PC-9 (cell line): ENCODE measurements at regions of chr7 and their contacts with region 1.

Region 1: GRCh38 chr7:101426303-101427011 is 63.8 kb downstream of the COL26A1 start:
- DNase-seq: no peak
- H3K4me3 ChIP-seq: no peak overlapping the region
- H3K27ac ChIP-seq: no peak overlapping the region
- H3K4me1 ChIP-seq: no peaks in the 10 kb centered on the region
- H3K27me3 ChIP-seq: peaks cover 51% of the 10 kb centered on the region
- CTCF ChIP-seq: no peak

Region 2: GRCh38 chr7:101391991-101392390 is 34.5 kb before region 1 on chr7:
- CTCF ChIA-PET with region 1: no interaction called
- POLR2A ChIA-PET with region 1: interaction called, 37 read pairs
- intact Hi-C with region 1: no loop called
- DNase-seq: no peak
- H3K4me3 ChIP-seq: no peak overlapping the region
- H3K27ac ChIP-seq: no peak overlapping the region
- H3K4me1 ChIP-seq: no peaks in the 10 kb centered on the region
- H3K27me3 ChIP-seq: no peaks in the 10 kb centered on the region; the same call in 1 of the 2 replicates
- CTCF ChIP-seq: no peak

Region 3: DNA sequence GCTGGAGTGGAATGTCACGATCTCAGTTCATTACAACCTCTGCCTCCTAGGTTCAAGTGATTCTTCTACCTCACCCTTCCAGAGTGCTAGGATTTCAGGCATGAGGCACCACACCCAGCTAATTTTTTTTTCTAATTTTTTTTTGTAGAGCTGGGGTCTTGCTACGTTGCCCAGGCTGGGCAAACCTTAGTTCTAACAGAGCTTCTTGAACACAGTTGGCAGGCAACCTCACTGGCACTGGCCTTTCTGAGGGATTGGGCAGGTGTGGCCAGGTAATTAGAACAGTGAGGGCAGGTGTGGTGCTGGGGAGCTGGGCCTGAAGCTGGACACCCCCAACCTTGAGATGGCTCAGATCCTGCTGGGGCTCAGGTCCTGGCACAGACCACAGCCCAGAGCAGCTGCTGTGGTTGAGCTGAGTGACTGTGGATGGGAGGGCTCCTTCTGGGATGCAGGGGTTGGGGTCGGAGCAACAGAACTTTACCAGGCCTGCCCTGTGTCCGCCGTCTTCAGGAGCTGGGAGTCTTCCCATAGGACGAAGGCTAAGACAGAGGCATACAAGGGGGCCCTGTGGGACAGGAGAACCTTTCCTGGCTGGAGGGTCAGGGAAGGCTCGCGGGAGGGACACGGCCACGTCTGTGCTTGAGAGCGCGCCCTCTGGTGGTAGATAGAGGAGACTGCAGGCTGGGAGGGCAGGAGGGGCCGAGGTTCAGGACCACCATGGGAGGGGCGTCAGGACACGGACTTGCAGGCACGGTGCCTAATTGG is 15.5 kb before region 1 on chr7:
- CTCF ChIA-PET with region 1: interaction called, 3 read pairs
- POLR2A ChIA-PET with region 1: interaction called, 15 read pairs
- intact Hi-C with region 1: no loop called
- DNase-seq: peak in 1 of 2 experiments; percentile 31
- H3K4me3 ChIP-seq: no peak overlapping the region
- H3K27ac ChIP-seq: no peak overlapping the region
- H3K4me1 ChIP-seq: no peaks in the 10 kb centered on the region
- H3K27me3 ChIP-seq: peaks cover 31% of the 10 kb centered on the region
- CTCF ChIP-seq: peak; percentile 86

Region 4: DNA sequence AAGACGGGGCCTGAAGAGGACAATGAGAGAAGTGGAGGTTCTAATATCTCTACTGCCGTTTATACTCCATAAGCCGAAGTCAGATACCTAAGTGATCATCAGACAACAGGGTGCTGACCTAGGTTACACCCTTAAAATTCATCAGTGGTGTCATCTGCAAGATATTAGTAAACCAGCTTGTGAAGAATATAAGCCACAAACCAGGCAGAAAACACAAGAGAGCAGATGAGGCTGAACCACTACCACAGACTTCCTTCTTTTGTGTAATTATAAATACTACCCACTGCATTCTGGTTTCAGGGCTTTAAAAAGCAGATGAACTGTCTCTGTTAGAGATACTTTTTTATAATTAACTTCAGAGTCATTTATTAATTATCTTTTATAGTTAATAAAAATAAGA is 1417.4 kb after region 1 on chr7:
- CTCF ChIA-PET with region 1: interaction called, 19 read pairs
- POLR2A ChIA-PET with region 1: no interaction called
- intact Hi-C with region 1: no loop called
- DNase-seq: no peak
- H3K4me3 ChIP-seq: no peak overlapping the region
- H3K27ac ChIP-seq: no peak overlapping the region
- H3K4me1 ChIP-seq: no peaks in the 10 kb centered on the region
- H3K27me3 ChIP-seq: no peaks in the 10 kb centered on the region
- CTCF ChIP-seq: no peak